CD8-positive, alpha-beta memory T cell (primary cell): ENCODE measurements at regions of chr4 and their contacts with region 1.

Region 1: GRCh38 chr4:56799824-56800756 is 21.4 kb downstream of the SPINK2 start:
- DNase-seq: peak; percentile 67 to 87 (median 74)
- H3K4me3 ChIP-seq: peak overlapping the region; percentile 94
- H3K4me3 Mint-ChIP-seq: peak overlapping the region; percentile 92 to 97 (median 94)
- H3K27ac ChIP-seq: peak overlapping the region; percentile 62
- H3K27ac Mint-ChIP-seq: peak overlapping the region; percentile 46 to 97 (median 94)
- H3K4me1 ChIP-seq: peaks cover 3% of the 10 kb centered on the region
- H3K4me1 Mint-ChIP-seq: peaks cover 15 to 30% (median 26%) of the 10 kb centered on the region in 3 donors
- H3K27me3 ChIP-seq: no peaks in the 10 kb centered on the region
- H3K27me3 Mint-ChIP-seq: no peaks in the 10 kb centered on the region

Region 2: GRCh38 chr4:56570041-56570440 is 230.0 kb before region 1 on chr4:
- CTCF ChIA-PET with region 1: interaction called, 27 read pairs
- POLR2A ChIA-PET with region 1: no interaction called
- DNase-seq: no peak
- H3K4me3 ChIP-seq: no peak overlapping the region
- H3K4me3 Mint-ChIP-seq: no peak overlapping the region
- H3K27ac ChIP-seq: no peak overlapping the region
- H3K27ac Mint-ChIP-seq: no peak overlapping the region
- H3K4me1 ChIP-seq: no peaks in the 10 kb centered on the region
- H3K4me1 Mint-ChIP-seq: peaks cover 0 to 3% (median 0%) of the 10 kb centered on the region in 3 donors
- H3K27me3 ChIP-seq: no peaks in the 10 kb centered on the region
- H3K27me3 Mint-ChIP-seq: peaks cover 0 to 4% of the 10 kb centered on the region in 2 donors

Region 3: DNA sequence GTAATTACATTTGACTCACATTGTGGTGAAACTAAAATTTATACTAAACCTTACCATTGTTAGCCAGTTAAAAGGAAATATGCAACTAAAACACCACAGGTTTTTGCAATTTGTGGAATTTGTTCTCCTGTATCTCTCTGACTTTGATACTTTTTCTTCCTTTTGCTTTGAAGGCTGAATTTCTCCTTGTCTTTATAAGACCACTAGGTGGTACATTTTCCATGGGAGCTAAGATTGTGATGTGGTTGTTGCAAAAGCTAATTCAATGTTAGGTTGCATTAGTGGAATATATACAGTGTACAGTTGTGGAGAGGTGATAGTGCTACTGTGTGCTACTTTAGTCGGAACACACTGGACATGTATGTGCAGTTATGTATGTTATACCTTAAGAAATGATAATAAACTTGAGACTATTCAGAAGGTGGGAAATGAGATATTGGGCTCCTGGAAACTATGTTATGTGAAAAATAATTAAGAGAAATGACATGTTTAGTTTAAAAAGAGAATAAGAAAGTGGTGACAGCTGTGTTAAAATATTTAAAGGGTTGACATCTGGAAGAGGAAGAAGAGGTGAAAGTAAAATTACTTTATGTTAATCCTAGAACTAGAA is 224.2 kb before region 1 on chr4:
- CTCF ChIA-PET with region 1: interaction called, 27 read pairs
- POLR2A ChIA-PET with region 1: interaction called, 4 read pairs
- DNase-seq: peak in 2 of 5 donors; percentile 10 to 24
- H3K4me3 ChIP-seq: no peak overlapping the region
- H3K4me3 Mint-ChIP-seq: no peak overlapping the region
- H3K27ac ChIP-seq: no peak overlapping the region
- H3K27ac Mint-ChIP-seq: no peak overlapping the region
- H3K4me1 ChIP-seq: no peaks in the 10 kb centered on the region
- H3K4me1 Mint-ChIP-seq: no peaks in the 10 kb centered on the region
- H3K27me3 ChIP-seq: no peaks in the 10 kb centered on the region
- H3K27me3 Mint-ChIP-seq: peaks cover 0 to 16% of the 10 kb centered on the region in 2 donors

Region 4: DNA sequence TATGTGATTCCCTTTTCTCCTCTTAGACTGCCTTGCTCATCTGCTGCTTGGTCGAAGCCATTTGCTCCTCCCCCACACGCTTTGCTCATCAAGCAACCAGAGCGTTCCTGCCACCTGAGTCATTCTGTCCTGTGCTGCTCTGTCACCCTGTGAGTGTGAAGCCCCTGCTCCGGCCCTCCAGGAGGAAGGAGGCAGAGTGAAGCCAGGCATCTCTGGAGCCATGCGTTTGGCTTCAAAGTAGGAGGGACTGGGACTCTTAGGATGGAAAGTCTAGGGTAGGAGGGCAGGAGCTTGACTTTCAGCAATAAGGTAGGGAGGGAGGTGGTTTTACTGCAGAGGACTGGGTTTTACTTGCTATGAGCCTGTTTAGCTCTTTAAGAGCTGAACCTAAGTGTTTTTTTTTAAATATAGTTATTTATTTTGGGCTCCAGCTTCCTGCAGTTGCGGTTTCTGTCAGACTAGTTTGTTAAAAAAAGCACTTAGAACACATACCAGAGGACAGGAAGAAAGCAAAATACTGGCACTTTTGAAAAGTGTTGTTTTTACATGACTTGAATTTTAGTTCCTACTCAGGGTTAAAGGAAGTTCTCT is 42.2 kb before region 1 on chr4:
- CTCF ChIA-PET with region 1: interaction called, 25 read pairs
- POLR2A ChIA-PET with region 1: interaction called, 7 read pairs
- DNase-seq: peak; percentile 19 to 79 (median 49)
- H3K4me3 ChIP-seq: peak overlapping the region; percentile 54
- H3K4me3 Mint-ChIP-seq: peak overlapping the region; percentile 25 to 93 (median 84)
- H3K27ac ChIP-seq: peak overlapping the region; percentile 10
- H3K27ac Mint-ChIP-seq: peak overlapping the region; percentile 84 to 97 (median 94)
- H3K4me1 ChIP-seq: peaks cover 37% of the 10 kb centered on the region
- H3K4me1 Mint-ChIP-seq: peaks cover 55 to 63% (median 60%) of the 10 kb centered on the region in 3 donors
- H3K27me3 ChIP-seq: no peaks in the 10 kb centered on the region
- H3K27me3 Mint-ChIP-seq: peaks cover 0 to 1% of the 10 kb centered on the region in 2 donors